ENCODE measurements at regions of chr3 and their contacts with region 1.

Region 1: DNA sequence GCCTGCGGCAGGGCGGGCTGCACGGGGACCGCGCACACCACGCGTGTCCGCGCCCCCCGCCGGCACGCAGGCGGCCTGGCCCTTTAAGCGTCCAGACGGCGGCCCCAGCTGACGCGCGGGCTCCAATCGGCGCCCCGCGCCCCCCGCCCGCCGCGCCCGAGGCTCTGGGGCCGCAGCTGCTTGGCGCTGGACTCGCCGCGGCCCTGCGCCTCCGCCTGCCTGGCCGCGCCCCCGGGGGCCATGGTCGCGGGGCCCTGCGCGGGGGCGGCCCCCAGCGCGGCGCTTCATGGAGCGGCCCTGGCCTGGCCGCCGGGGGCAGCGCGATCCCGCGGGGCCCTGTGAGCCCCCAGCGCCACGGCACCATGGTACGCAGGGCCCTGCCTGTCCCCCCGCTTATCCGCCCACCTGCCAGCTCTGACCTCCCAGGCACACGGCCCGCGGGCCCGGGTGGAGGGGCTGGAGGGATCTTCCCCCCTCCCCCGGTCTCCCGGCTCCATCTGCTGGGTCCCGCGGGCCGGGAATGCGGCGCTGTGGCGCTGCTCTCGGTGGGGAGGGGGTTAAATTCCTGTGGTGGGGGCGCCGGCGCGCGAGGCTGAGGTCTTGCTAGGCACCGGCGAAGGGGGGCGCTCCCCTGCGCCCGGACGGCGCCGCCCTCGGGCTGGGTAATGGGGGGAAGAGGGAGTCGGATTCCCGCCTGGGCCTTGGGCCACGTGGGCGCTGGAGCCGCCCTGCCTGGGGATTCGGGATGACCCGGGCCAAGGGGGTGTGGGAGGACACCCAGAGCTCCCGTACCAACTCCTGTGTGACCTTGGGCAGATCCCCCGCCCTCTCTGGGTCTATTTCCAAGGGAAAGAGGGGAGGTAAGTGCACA is 1.1 kb downstream of the ZBTB47 start:
- DNase-seq: peak; percentile 53
- H3K4me3 ChIP-seq: peak overlapping the region; percentile 64
- H3K27ac ChIP-seq: peak overlapping the region; percentile 82
- H3K4me1 ChIP-seq: no peaks in the 10 kb centered on the region
- H3K27me3 ChIP-seq: no peaks in the 10 kb centered on the region
- CTCF ChIP-seq: no peak

Region 2: DNA sequence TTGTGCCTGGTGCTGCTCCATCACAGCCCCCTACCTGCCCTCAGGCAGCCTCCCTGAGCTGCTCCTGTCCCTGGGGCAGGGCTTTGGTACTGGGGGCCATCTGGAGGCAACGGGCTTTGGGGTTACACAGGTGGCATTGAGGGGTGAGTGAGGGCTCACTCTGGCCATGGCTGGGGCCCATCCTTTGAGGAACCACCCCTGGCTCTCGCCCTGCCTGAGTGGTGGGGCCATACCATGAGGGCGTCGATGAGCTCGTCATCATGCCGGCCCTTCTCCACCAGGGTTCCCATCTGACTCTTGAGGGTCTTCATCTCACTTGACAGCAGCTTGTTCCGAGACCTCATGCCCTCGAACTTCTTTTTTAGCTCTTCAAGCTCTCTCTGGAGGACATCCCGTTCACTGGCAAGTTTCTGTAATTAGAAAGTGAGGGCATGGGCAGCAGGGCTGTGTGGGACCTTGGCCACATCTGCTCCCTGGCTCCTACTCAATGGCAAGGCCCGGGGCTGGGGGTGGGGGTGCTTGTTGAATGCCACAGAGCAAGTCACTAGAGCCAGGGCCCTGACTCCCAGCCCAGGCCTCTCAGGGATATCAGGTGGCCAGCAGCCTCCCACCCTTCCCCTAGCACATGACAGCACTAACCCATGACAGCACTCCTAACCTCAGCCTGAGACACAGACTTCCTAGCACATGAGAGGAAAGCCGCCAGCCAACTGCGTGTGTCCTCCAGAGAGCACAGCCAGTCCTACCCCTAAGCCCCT is 85.0 kb after region 1 on chr3:
- intact Hi-C with region 1: loop called (anchors 5 kb)
- DNase-seq: peak; percentile 19
- H3K4me3 ChIP-seq: no peak overlapping the region
- H3K27ac ChIP-seq: no peak overlapping the region
- H3K4me1 ChIP-seq: no peaks in the 10 kb centered on the region
- H3K27me3 ChIP-seq: no peaks in the 10 kb centered on the region
- CTCF ChIP-seq: no peak